ENCODE measurements at regions of chr19 and their contacts with region 1.

Region 1: GRCh38 chr19:47428177-47428894 is 9.0 kb upstream of the MEIS3 start:
- DNase-seq: peak; percentile 97
- ATAC-seq: peak; percentile 88
- H3K4me3 Mint-ChIP-seq: no peak overlapping the region
- H3K27ac Mint-ChIP-seq: no peak overlapping the region
- H3K4me1 Mint-ChIP-seq: peaks cover 24% of the 10 kb centered on the region
- H3K27me3 Mint-ChIP-seq: peaks cover 43% of the 10 kb centered on the region
- CTCF ChIP-seq: no peak

Region 2: GRCh38 chr19:47296036-47296435 is 132.3 kb before region 1 on chr19:
- CTCF ChIA-PET with region 1: interaction called, 23 read pairs
- POLR2A ChIA-PET with region 1: interaction called, 3 read pairs
- intact Hi-C with region 1: no loop called
- DNase-seq: peak; percentile 89
- ATAC-seq: peak; percentile 97
- H3K4me3 Mint-ChIP-seq: no peak overlapping the region
- H3K27ac Mint-ChIP-seq: no peak overlapping the region
- H3K4me1 Mint-ChIP-seq: peaks cover 4% of the 10 kb centered on the region
- H3K27me3 Mint-ChIP-seq: no peaks in the 10 kb centered on the region
- CTCF ChIP-seq: peak; percentile 78

Region 3: GRCh38 chr19:47348819-47349795 is 79.2 kb before region 1 on chr19 and contains the start of gene DHX34:
- CTCF ChIA-PET with region 1: interaction called, 20 read pairs
- POLR2A ChIA-PET with region 1: no interaction called
- intact Hi-C with region 1: no loop called
- DNase-seq: peak; percentile 100
- ATAC-seq: peak; percentile 99
- H3K4me3 Mint-ChIP-seq: peak within 1 kb of the TSS; percentile 94
- H3K27ac Mint-ChIP-seq: peak within 1 kb of the TSS; percentile 94
- H3K4me1 Mint-ChIP-seq: peaks cover 38% of the 10 kb centered on the region
- H3K27me3 Mint-ChIP-seq: no peaks in the 10 kb centered on the region
- CTCF ChIP-seq: peak; percentile 87
- total RNA-seq, gene DHX34: 14.2 to 14.9 TPM

Region 4: GRCh38 chr19:47391510-47392223 is 36.7 kb before region 1 on chr19:
- CTCF ChIA-PET with region 1: interaction called, 18 read pairs
- POLR2A ChIA-PET with region 1: no interaction called
- intact Hi-C with region 1: no loop called
- DNase-seq: peak; percentile 88
- ATAC-seq: peak; percentile 93
- H3K4me3 Mint-ChIP-seq: no peak overlapping the region
- H3K27ac Mint-ChIP-seq: no peak overlapping the region
- H3K4me1 Mint-ChIP-seq: peaks cover 4% of the 10 kb centered on the region
- H3K27me3 Mint-ChIP-seq: peaks cover 7% of the 10 kb centered on the region
- CTCF ChIP-seq: peak; percentile 94

Region 5: DNA sequence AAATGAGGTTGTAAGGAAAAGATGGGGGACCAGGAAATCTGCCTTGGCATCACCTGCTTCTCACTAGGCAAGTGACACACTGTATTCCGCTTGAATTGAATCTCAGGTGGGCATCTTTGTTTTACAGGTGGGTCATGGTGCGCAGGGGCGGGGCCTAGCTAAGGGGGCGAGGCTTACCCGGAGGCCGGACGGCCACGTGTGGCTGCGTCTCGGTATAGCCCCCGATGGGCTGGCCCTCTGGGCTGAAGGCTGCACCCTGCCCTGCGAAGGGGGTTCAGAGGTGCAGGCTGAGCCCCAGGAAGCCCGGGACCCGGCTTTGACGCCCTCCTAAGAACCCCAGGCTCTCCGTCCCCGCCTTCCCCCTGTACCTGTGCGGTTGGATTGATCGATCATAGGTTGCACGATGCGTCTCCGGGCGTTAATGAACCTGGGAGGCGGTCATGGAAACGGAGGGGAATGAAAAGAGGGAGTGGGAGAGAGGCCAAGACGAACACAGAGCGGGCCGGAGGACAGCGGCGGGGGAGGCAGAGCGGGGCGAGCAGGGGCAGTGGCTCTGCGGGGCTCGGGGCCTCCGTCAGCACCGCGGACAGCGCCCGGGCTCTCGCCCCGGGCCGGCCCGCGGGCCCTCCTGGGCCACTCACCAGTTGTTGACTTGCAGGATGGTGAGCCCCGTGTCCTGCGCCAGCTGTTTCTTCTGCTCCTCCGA is 21.5 kb before region 1 on chr19:
- CTCF ChIA-PET with region 1: no interaction called
- POLR2A ChIA-PET with region 1: no interaction called
- intact Hi-C with region 1: no loop called
- DNase-seq: no peak
- ATAC-seq: peak; percentile 37
- H3K4me3 Mint-ChIP-seq: no peak overlapping the region
- H3K27ac Mint-ChIP-seq: no peak overlapping the region
- H3K4me1 Mint-ChIP-seq: no peaks in the 10 kb centered on the region
- H3K27me3 Mint-ChIP-seq: peaks cover 31% of the 10 kb centered on the region
- CTCF ChIP-seq: no peak

Region 6: GRCh38 chr19:47483800-47484690 is 55.7 kb after region 1 on chr19 and contains the start of gene KPTN:
- CTCF ChIA-PET with region 1: interaction called, 20 read pairs
- POLR2A ChIA-PET with region 1: no interaction called
- intact Hi-C with region 1: no loop called
- DNase-seq: peak; percentile 93
- ATAC-seq: peak; percentile 84
- H3K4me3 Mint-ChIP-seq: peak within 1 kb of the TSS; percentile 85
- H3K27ac Mint-ChIP-seq: peak within 1 kb of the TSS; percentile 99
- H3K4me1 Mint-ChIP-seq: peaks cover 36% of the 10 kb centered on the region
- H3K27me3 Mint-ChIP-seq: no peaks in the 10 kb centered on the region
- CTCF ChIP-seq: peak; percentile 96
- total RNA-seq, gene KPTN: 10.4 to 11.0 TPM

Region 7: GRCh38 chr19:47707135-47707925 is 279.0 kb after region 1 on chr19:
- CTCF ChIA-PET with region 1: interaction called, 91 read pairs
- POLR2A ChIA-PET with region 1: no interaction called
- intact Hi-C with region 1: no loop called
- DNase-seq: peak; percentile 88
- ATAC-seq: peak; percentile 99
- H3K4me3 Mint-ChIP-seq: no peak overlapping the region
- H3K27ac Mint-ChIP-seq: no peak overlapping the region
- H3K4me1 Mint-ChIP-seq: no peaks in the 10 kb centered on the region
- H3K27me3 Mint-ChIP-seq: peaks cover 9% of the 10 kb centered on the region
- CTCF ChIP-seq: peak; percentile 88

Region 8: DNA sequence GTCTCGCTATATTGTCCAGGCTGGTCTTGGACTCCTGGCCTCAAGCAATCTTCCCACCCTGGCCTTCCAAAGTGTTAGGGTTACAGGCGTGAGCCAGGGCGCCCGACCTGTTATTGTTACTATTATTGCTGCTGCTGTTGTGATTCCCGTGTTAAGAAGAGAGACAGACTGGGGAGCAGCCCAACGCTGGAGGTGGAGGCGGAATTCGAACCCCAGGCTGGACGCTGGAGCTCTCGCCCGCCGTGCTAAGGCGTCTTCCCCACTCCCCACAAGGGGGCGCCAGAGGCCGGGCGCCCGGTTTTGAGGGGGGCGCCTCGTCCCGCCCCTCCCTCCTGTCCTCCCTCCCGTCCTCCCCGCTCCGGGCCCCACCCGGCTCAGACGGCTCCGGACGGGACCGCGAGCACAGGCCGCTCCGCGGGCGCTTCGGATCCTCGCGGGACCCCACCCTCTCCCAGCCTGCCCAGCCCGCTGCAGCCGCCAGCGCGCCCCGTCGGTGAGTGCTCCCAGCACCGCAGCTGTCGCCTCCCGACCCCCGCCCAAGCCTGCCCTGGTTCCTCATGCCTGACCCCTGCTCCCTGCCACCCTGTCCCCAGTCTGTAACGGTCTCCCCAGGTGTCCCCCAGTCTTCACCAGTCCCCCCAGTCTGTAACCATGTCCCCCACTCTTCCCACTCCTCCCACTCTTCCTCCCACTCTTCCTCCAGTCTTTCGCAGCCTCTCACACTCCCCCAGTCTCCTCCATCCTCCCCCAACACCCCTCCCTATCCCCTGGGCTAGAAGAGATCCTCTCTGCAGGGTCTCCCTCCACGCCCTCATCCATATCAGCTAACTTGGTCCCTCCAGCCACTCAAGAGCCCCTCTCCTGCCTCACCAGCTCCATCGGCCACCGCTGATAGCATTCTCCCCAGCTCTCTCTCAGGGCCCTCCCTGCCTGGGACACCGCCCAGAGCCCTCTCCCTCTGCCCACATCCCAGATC is 285.0 kb after region 1 on chr19 and contains the start of gene EHD2:
- CTCF ChIA-PET with region 1: interaction called, 91 read pairs
- POLR2A ChIA-PET with region 1: interaction called, 3 read pairs
- intact Hi-C with region 1: no loop called
- DNase-seq: peak; percentile 57
- ATAC-seq: peak; percentile 88
- H3K4me3 Mint-ChIP-seq: peak within 1 kb of the TSS; percentile 16
- H3K27ac Mint-ChIP-seq: no peak within 1 kb of the TSS
- H3K4me1 Mint-ChIP-seq: peaks cover 2% of the 10 kb centered on the region
- H3K27me3 Mint-ChIP-seq: peaks cover 32% of the 10 kb centered on the region
- CTCF ChIP-seq: peak; percentile 94
- total RNA-seq, gene EHD2: 1.1 to 1.4 TPM

Measured in activated CD8-positive, alpha-beta T cell treated with anti-CD3 and anti-CD28 coated beads for 36 hours (primary cell).